MCF 10A (cell line): ENCODE measurements at regions of chr2 and their contacts with region 1.

Region 1: DNA sequence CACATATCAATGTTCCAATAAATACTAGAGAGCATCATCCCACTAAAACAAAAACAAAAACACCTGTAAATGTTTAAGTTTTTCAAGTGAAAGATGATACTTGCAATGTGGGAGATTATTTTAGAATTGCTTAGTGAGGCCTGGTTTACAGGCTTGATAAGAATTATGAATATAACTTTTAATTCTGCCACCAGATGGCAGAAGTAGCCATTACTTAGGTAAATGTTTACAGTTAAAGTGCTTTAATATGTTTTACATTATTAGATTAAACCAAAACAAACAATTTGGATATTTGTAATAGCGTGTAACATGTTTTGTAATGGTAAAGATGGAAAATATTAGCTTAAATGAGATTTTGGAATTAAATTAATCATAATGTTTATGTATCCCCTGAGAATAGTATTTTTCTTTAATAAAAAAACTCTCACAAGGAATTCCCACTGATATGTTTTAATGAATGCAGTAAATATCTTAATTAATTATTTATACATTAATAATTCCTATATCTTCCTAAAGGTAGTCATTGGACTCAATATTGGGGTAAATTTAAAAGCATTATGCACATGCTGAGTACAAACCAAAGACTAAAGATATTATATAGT is 522.0 kb downstream of the SPAG16 start:
- DNase-seq: peak; percentile 46
- H3K4me3 Mint-ChIP-seq: no peak overlapping the region
- H3K27ac Mint-ChIP-seq: no peak overlapping the region
- H3K4me1 Mint-ChIP-seq: no peaks in the 10 kb centered on the region
- H3K27me3 Mint-ChIP-seq: no peaks in the 10 kb centered on the region
- CTCF ChIP-seq: peak; percentile 38

Region 2: GRCh38 chr2:213934560-213934959 is 128.3 kb after region 1 on chr2:
- CTCF ChIA-PET with region 1: no interaction called
- POLR2A ChIA-PET with region 1: no interaction called
- intact Hi-C with region 1: loop called (anchors 10 kb)
- DNase-seq: peak; percentile 42
- H3K4me3 Mint-ChIP-seq: no peak overlapping the region
- H3K27ac Mint-ChIP-seq: no peak overlapping the region
- H3K4me1 Mint-ChIP-seq: peaks cover under 1% of the 10 kb centered on the region
- H3K27me3 Mint-ChIP-seq: no peaks in the 10 kb centered on the region
- CTCF ChIP-seq: peak; percentile 26

Region 3: DNA sequence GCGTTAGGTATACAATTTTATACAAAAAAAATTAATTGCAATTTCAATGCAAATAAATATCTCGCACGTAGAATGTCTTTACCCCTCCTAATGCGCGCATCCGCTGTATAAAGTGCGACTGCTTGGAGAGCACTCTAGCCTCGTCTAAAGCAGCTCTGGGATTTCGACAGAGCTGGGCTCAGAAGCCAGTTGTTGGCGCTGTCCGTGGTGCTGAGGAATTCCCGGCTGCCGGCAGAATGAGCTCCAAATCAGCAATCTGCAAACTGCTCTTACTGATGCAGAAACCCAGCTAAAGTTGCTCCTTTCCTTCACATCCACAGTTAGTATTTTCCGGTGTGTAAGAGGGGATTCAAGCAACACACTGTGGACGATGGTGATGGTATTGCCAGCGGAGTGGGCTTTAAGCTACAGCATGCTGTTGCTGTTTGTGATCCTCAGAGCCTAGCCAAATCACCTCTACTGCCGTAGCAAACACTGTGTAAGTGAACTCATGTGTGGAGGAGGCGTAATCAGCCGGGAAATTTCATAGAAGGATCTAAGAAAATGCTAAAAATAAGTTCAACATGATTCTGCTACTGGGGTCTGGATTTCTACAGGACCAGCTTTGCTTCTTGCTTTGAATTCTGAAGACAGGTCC is 604.8 kb after region 1 on chr2 and contains the start of gene VWC2L:
- CTCF ChIA-PET with region 1: interaction called, 3 read pairs
- POLR2A ChIA-PET with region 1: no interaction called
- intact Hi-C with region 1: loop called (anchors 1 kb)
- DNase-seq: peak; percentile 83
- H3K4me3 Mint-ChIP-seq: no peak within 1 kb of the TSS
- H3K27ac Mint-ChIP-seq: no peak within 1 kb of the TSS
- H3K4me1 Mint-ChIP-seq: peaks cover 5% of the 10 kb centered on the region
- H3K27me3 Mint-ChIP-seq: no peaks in the 10 kb centered on the region
- CTCF ChIP-seq: no peak
- total RNA-seq, gene VWC2L: not detected in 2 replicates

Region 4: GRCh38 chr2:214587442-214587841 is 781.2 kb after region 1 on chr2:
- CTCF ChIA-PET with region 1: no interaction called
- POLR2A ChIA-PET with region 1: no interaction called
- intact Hi-C with region 1: loop called (anchors 5 kb)
- DNase-seq: no peak
- H3K4me3 Mint-ChIP-seq: no peak overlapping the region
- H3K27ac Mint-ChIP-seq: no peak overlapping the region
- H3K4me1 Mint-ChIP-seq: no peaks in the 10 kb centered on the region
- H3K27me3 Mint-ChIP-seq: no peaks in the 10 kb centered on the region
- CTCF ChIP-seq: no peak

Region 5: GRCh38 chr2:214699236-214699635 is 893.0 kb after region 1 on chr2:
- CTCF ChIA-PET with region 1: no interaction called
- POLR2A ChIA-PET with region 1: no interaction called
- intact Hi-C with region 1: loop called (anchors 2 kb)
- DNase-seq: peak; percentile 54
- H3K4me3 Mint-ChIP-seq: no peak overlapping the region
- H3K27ac Mint-ChIP-seq: peak overlapping the region; percentile 2
- H3K4me1 Mint-ChIP-seq: peaks cover 8% of the 10 kb centered on the region
- H3K27me3 Mint-ChIP-seq: no peaks in the 10 kb centered on the region
- CTCF ChIP-seq: no peak